Activated CD8-positive, alpha-beta T cell treated with anti-CD3 and anti-CD28 coated beads, Interleukin-2, amount 10 ng/mL, durations not matched to agents 7 days and 5 days (primary cell): ENCODE measurements at regions of chr7 and their contacts with region 1.

Region 1: DNA sequence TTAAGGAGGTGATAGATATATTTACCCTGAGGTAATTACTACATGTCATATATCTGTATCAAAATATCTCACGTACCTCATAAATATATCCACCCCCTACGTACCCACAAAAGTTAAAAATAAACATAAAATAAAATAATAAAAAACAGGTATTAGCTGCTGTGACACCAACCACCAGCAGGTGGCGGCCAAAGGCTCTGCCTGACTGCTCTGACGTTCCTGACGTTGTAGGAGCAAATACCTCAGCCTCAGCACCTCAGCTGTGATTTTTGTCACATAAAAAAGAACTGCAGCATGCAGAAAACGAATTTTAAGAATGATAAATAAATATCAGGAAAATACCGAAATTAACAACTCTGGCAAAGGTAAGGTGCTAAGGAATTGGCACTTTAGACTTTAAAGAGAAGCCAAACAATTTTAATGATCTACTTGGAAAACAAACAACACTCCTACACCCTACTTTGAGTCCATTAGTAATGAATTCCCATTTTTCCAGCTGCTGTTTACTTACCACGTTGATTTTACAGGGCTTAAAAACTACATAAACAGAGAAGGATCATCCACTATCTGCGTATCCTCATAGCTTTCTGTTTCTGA is 125.4 kb upstream of the TARP start:
- DNase-seq: peak; percentile 61
- ATAC-seq: peak; percentile 58
- H3K4me3 Mint-ChIP-seq: no peak overlapping the region
- H3K27ac Mint-ChIP-seq: no peak overlapping the region
- H3K4me1 Mint-ChIP-seq: no peaks in the 10 kb centered on the region
- H3K27me3 Mint-ChIP-seq: peaks cover 11% of the 10 kb centered on the region

Region 2: GRCh38 chr7:38411404-38411803 is 12.6 kb after region 1 on chr7:
- CTCF ChIA-PET with region 1: interaction called, 15 read pairs
- POLR2A ChIA-PET with region 1: interaction called, 3 read pairs
- DNase-seq: no peak
- ATAC-seq: no peak
- H3K4me3 Mint-ChIP-seq: no peak overlapping the region
- H3K27ac Mint-ChIP-seq: no peak overlapping the region
- H3K4me1 Mint-ChIP-seq: peaks cover 18% of the 10 kb centered on the region
- H3K27me3 Mint-ChIP-seq: no peaks in the 10 kb centered on the region

Region 3: GRCh38 chr7:38506756-38507155 is 107.9 kb after region 1 on chr7:
- CTCF ChIA-PET with region 1: no interaction called
- POLR2A ChIA-PET with region 1: no interaction called
- DNase-seq: no peak
- ATAC-seq: no peak
- H3K4me3 Mint-ChIP-seq: no peak overlapping the region
- H3K27ac Mint-ChIP-seq: no peak overlapping the region
- H3K4me1 Mint-ChIP-seq: no peaks in the 10 kb centered on the region
- H3K27me3 Mint-ChIP-seq: peaks cover 11% of the 10 kb centered on the region

Region 4: GRCh38 chr7:38660427-38661099 is 261.7 kb after region 1 on chr7:
- CTCF ChIA-PET with region 1: interaction called, 46 read pairs
- POLR2A ChIA-PET with region 1: no interaction called
- DNase-seq: peak; percentile 34
- ATAC-seq: no peak
- H3K4me3 Mint-ChIP-seq: no peak overlapping the region
- H3K27ac Mint-ChIP-seq: no peak overlapping the region
- H3K4me1 Mint-ChIP-seq: no peaks in the 10 kb centered on the region
- H3K27me3 Mint-ChIP-seq: peaks cover 18% of the 10 kb centered on the region